BJ (cell line): ENCODE measurements at regions of chr12 and their contacts with region 1.

Region 1: DNA sequence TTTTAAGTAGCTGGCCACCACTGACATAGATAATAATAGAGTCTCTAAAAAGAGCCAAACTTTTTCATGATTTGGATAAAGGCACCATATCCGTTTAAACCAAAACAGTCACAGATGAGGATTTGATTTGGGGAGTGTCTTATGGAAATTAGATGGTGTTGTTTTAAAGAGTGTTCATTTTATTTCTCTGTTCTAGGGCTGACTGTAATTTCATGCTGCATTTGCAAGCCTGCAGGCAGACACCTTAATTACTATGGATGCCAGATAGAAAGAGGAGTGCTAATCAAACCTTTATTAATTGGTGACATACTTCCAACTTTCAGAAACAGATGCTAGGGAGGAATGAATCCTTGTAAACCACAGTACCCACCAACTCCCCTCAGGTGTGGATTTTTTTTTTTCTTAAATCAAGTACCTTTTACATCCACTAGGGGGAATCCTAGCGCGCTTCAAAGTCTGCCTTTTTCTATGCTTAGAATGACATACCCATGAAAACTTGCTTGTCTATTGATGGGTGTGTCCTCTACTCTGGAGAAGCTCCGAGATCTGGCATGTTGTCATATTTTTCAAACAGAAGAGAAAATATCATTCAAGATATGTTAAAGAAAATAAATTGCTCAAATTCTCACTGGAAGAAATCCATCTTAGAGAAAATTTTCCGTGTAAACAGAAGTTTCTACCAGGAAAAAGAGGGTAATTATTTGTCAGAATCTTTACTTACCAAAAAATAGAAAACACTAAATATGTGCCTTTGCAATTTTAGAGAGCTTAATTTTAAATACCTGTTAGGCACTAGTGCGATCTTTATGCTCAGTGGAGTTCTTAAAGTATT is 14.2 kb upstream of the PLXNC1 start:
- DNase-seq: peak; percentile 17
- H3K4me3 ChIP-seq: no peak overlapping the region
- H3K27me3 ChIP-seq: peaks cover 1% of the 10 kb centered on the region; the same call in 1 of the 2 replicates
- CTCF ChIP-seq: peak; percentile 67

Region 2: DNA sequence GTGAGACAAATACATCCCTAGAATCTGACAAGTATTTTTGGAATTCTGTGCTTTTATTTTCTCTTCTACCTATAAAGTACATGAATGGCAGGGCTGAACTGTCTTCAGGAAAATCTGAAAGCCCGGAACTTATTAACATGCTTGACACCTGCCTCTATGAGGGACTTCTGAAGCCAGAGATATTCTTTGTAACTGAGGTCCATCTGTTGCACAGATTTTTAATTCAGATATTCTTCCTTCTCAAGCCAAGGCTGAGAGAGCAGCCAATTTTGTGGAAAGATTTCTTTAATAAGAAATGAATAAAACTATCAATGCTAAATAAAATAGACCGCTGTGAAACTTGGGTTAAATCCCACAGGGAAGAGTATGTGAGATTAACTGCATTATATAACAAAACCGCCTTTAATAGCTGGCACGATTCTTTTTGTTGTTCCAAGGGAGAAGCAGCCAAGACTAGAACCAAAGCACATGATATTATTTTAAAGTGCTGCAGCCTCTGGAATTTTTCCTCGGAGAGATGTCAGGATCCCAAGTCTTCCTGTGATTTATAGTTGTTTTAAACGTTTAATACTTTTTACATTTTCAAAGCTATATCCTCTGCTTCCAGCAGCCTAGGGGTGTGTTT is 308.1 kb before region 1 on chr12:
- CTCF ChIA-PET with region 1: no interaction called
- POLR2A ChIA-PET with region 1: no interaction called
- DNase-seq: peak; percentile 57
- H3K4me3 ChIP-seq: no peak overlapping the region
- H3K27me3 ChIP-seq: no peaks in the 10 kb centered on the region
- CTCF ChIP-seq: no peak

Region 3: DNA sequence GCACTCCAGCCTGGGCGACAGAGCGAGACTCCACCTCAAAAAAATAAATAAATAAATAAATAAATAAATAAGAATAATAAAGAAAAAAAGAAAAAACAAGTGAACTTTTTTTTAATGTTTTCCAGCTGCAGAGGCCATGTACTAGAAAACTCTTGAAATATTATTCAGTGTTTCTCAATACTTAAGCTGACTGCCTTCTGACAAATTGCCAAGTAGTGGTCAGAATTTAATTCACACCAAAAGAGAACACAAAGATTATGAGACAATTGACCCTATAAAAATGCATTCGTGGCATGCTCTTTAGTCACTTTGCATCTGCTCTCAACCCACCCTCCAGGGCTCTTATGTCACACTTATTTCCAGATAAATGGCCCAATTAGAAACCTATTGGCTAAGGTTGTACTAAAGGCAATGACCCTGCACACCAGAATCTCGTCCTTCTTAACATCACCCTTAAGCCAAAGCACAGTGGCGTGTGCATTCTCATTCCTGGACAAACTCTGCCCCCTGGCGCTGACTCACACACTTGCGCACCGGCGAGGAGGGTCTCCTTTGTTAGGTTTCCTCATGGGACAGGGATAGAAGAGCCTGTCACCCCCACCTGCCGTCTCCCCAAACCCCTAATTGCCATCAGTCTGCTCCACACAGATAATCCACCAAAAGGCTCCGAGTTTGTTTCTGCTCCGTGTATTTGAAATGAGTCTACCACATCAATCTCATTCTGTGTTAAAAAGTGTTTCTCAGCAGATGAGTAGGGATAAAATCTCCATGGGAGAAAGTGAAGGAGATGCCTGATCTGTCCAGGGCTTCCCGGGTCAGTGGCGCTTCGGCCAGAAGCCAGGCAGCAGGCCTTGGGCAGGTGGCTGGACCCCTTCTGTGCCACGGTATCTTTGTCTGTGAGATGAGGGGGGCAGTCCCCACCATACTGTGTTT is 398.6 kb after region 1 on chr12:
- CTCF ChIA-PET with region 1: interaction called, 28 read pairs
- POLR2A ChIA-PET with region 1: no interaction called
- DNase-seq: peak; percentile 2
- H3K4me3 ChIP-seq: no peak overlapping the region
- H3K27me3 ChIP-seq: peaks cover 3% of the 10 kb centered on the region; the same call in 1 of the 2 replicates
- CTCF ChIP-seq: peak; percentile 81